Right ventricle myocardium superior (tissue), 1 donor: ENCODE measurements at regions of chr3 and their contacts with region 1.

Region 1: DNA sequence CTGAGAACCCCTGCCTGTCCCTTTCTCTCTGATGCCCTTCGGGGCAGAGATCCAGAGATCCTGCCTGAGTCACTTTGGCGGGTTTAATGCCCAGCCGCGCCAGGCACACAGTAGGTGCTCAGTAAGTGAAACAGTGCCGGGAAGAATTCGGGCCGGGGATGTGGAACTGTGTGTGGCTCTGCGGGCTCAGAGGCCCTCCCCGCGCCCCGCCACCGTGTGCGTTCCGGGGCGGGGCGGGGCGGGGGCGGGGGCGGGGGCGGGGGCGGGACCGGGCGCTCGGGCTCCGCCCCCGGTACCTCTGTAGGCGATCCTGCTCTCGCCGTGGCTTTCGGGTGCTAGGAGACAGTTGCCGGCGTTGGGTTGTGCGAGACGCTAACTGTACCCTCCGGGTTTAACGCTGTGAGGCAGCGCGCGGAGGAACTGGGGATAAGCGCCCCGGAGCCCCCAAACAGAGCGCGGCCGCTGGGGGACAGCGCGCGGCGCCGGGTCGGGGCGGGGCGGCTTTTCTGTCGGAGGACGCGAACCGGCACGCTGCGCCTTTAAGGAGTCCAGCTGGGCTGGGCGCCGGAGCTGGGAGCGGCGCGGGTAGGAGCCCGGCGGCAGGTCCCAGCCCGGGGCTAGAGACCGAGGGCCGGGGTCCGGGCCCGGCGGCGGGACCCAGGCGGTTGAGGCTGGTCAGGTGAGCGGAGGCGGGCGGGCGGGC is at the start of gene ABHD6:
- DNase-seq: peak; percentile 81
- ATAC-seq: peak; percentile 95
- total RNA-seq, gene ABHD6: 8.3 TPM

Region 2: DNA sequence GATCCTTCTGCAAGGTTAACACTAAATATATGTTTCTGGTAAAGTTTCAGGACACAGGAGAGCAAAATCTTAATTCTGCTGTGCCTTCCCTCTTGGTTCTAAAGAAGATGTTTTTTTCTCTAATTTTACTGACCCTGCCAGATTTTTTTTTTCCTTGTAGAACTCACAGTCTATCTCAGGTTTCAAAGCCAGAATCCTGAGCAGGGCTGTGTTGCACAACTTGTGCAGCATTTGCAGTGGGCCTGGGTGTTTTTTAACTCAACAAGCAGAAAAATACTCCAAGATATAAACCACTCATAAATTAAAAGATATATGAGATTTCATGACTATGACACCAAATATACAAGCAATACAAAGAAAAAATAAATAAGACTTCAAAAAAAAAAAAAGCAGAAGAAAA is 600.0 kb before region 1 on chr3:
- intact Hi-C with region 1: no loop called
- DNase-seq: no peak
- ATAC-seq: no peak

Region 3: GRCh38 chr3:58288011-58288728 is 50.8 kb after region 1 on chr3:
- intact Hi-C with region 1: loop called (anchors 10 kb)
- DNase-seq: no peak
- ATAC-seq: peak; percentile 59

Region 4: DNA sequence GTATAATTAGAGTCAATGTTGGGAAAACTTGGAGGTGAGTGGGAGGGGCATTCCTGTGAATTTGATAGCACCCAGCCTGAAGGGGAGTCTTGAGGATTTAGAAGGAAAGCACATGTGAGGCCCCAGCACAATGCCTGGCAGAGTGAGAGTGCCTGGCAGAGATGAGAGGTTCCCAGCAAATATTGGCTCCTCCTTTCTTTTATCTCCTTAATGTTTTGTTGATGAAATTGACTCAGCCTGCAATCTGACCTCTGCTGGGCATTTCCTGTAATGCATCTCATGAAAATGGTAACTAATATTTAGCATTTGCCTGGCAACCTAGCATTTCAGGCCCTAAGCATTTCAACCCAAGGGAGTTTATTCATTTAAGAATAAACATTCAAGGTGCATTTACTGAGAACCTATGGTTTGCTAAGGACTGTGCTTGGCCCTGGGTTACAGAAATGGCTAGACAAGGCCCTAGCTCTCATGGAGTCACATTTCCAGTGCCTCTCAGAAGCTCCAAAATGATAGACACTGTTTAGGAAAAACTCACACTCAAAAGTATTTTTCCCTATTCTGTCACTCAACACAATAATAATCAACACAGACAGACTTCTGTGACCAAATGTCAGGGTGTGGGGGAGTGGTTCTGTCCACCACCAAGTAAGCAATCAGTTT is 177.3 kb after region 1 on chr3:
- intact Hi-C with region 1: no loop called
- DNase-seq: no peak
- ATAC-seq: peak; percentile 80